Activated B cell treated with CpG ODN at 0.5 μM for 24 hours (primary cell): ENCODE measurements at regions of chr2 and their contacts with region 1.

Region 1: GRCh38 chr2:20595431-20596192 is 55.3 kb downstream of the HS1BP3 start:
- DNase-seq: peak; percentile 45
- ATAC-seq: peak; percentile 83
- H3K4me3 Mint-ChIP-seq: peak overlapping the region; percentile 72
- H3K27ac Mint-ChIP-seq: peak overlapping the region; percentile 82
- H3K4me1 Mint-ChIP-seq: peaks cover 38% of the 10 kb centered on the region
- H3K27me3 Mint-ChIP-seq: peaks cover 21% of the 10 kb centered on the region
- CTCF ChIP-seq: no peak

Region 2: GRCh38 chr2:20525041-20526035 is 70.3 kb before region 1 on chr2:
- CTCF ChIA-PET with region 1: no interaction called
- POLR2A ChIA-PET with region 1: no interaction called
- intact Hi-C with region 1: loop called (anchors 1 kb)
- DNase-seq: peak; percentile 40
- ATAC-seq: peak; percentile 94
- H3K4me3 Mint-ChIP-seq: peak overlapping the region; percentile 76
- H3K27ac Mint-ChIP-seq: peak overlapping the region; percentile 41
- H3K4me1 Mint-ChIP-seq: peaks cover 21% of the 10 kb centered on the region
- H3K27me3 Mint-ChIP-seq: no peaks in the 10 kb centered on the region
- CTCF ChIP-seq: no peak

Region 3: GRCh38 chr2:20578895-20579825 is 16.5 kb before region 1 on chr2:
- CTCF ChIA-PET with region 1: no interaction called
- POLR2A ChIA-PET with region 1: no interaction called
- intact Hi-C with region 1: loop called (anchors 1 kb)
- DNase-seq: no peak
- ATAC-seq: no peak
- H3K4me3 Mint-ChIP-seq: no peak overlapping the region
- H3K27ac Mint-ChIP-seq: no peak overlapping the region
- H3K4me1 Mint-ChIP-seq: peaks cover 31% of the 10 kb centered on the region
- H3K27me3 Mint-ChIP-seq: no peaks in the 10 kb centered on the region
- CTCF ChIP-seq: no peak

Region 4: GRCh38 chr2:20635675-20636584 is 40.3 kb after region 1 on chr2:
- CTCF ChIA-PET with region 1: no interaction called
- POLR2A ChIA-PET with region 1: no interaction called
- intact Hi-C with region 1: loop called (anchors 2 kb)
- DNase-seq: peak; percentile 64
- ATAC-seq: peak; percentile 97
- H3K4me3 Mint-ChIP-seq: no peak overlapping the region
- H3K27ac Mint-ChIP-seq: no peak overlapping the region
- H3K4me1 Mint-ChIP-seq: peaks cover 8% of the 10 kb centered on the region
- H3K27me3 Mint-ChIP-seq: no peaks in the 10 kb centered on the region
- CTCF ChIP-seq: no peak